Posterior vena cava (tissue), 2 donors: ENCODE measurements at regions of chr7 and their contacts with region 1.

Region 1: DNA sequence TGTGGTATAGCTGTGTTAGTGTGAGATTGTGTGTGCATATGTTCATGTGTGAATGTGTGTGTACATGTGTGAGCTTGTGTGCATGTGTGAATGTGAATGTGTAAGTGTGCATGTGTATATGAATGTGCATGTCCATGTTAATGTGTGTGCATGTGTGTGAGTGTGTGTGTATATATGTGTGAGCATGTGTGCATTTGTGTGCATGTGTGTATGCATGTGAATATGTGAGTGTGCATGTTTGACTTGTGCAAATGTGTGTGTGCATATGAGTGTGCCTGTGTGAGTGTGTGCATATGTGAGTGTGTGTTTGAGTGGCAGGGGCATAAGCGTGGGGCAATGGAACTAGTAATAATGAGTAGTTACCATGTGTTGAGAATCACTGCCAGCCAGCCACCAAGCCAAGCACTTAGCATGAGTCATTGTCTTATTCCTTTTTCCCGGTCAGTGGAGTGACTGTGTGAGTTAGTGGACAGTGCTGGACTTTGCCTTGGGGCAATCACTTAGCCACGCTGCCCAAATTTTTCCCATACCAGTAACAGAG is 46.3 kb upstream of the SHH start:
- DNase-seq: peak; percentile 28

Region 2: DNA sequence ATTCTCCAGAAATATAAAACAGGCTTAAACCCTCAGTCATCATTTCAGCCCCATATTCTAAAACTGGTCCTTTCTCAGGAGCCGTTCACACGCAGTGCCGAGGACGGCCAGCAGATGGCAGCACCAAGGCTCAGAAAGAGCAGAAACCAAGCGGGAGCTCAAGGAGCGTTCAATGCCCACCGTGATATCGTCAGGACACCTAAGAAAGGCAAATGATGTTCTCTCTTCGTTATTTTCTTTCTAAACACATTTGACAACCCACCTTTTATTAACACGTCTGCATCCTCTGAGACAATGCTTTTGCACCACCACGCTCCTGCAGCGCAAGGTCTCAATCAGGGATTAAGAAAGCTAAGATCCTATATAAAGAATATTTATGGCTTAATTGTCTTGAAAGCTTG is 259.8 kb before region 1 on chr7:
- intact Hi-C with region 1: no loop called
- DNase-seq: peak; percentile 93

Region 3: GRCh38 chr7:155710530-155710929 is 148.1 kb before region 1 on chr7:
- intact Hi-C with region 1: no loop called
- DNase-seq: no peak

Region 4: DNA sequence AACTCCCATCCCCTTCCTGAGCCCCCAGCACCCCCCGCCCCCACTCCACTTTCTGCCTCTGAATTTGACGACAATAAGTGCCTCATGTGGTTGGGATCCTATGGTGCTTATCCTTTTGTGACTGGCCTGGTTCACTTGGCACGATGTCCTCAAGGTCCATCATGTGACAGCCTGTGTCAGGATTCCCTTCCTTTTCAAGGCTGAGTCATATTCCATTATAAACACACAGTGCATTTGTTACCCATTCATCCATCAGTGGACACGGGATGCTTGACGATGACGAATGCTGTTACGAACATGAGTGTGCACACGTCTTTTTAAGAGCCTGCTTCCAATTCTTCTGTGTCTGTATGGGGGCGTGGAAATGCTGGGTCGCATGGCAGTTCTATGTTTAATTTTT is 73.1 kb before region 1 on chr7:
- intact Hi-C with region 1: loop called in 1 of 2 experiments (anchors 2 kb)
- DNase-seq: no peak

Region 5: GRCh38 chr7:155824227-155824886 is 34.2 kb before region 1 on chr7:
- intact Hi-C with region 1: loop called in 1 of 2 experiments (anchors 1 kb)
- DNase-seq: no peak